ENCODE measurements at regions of chr6 and their contacts with region 1.

Region 1: DNA sequence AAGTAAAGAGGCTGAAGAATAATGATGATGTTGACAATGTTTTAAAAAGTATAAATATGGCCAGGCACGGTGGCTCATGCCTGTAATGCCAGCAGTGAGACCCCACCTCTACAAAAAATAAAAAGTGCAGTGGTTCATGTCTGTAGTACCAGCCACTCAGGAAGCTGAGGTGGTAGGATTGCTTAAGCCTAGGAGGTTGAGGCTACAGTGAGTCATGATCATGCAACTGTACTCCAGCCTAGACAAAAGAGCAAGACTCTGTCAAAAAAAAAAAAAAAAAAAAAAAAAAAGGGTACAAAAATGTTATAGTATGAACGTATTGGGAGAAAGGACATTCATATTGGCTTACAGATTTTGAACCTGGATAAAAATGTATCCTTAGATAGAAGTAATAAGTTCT is 543.1 kb upstream of the IRAK1BP1 start:
- DNase-seq: no peak
- H3K4me3 ChIP-seq: no peak overlapping the region
- H3K27ac ChIP-seq: no peak overlapping the region
- H3K4me1 ChIP-seq: no peaks in the 10 kb centered on the region
- H3K27me3 ChIP-seq: no peaks in the 10 kb centered on the region
- CTCF ChIP-seq: no peak

Region 2: GRCh38 chr6:78110641-78111040 is 213.6 kb before region 1 on chr6:
- intact Hi-C with region 1: no loop called
- DNase-seq: no peak
- H3K4me3 ChIP-seq: no peak overlapping the region
- H3K27ac ChIP-seq: no peak overlapping the region
- H3K4me1 ChIP-seq: no peaks in the 10 kb centered on the region
- H3K27me3 ChIP-seq: no peaks in the 10 kb centered on the region
- CTCF ChIP-seq: no peak

Region 3: GRCh38 chr6:78253618-78254017 is 70.6 kb before region 1 on chr6:
- intact Hi-C with region 1: loop called (anchors 2 kb)
- DNase-seq: no peak
- H3K4me3 ChIP-seq: no peak overlapping the region
- H3K27ac ChIP-seq: no peak overlapping the region
- H3K4me1 ChIP-seq: no peaks in the 10 kb centered on the region
- H3K27me3 ChIP-seq: no peaks in the 10 kb centered on the region
- CTCF ChIP-seq: no peak

Measured in tibial artery (tissue), 4 donors.